ENCODE measurements at regions of chr14 and their contacts with region 1.

Region 1: GRCh38 chr14:24332268-24332993 is 2.4 kb downstream of the ADCY4 start:
- H3K4me3 ChIP-seq: no peak overlapping the region
- H3K27ac ChIP-seq: no peak overlapping the region
- H3K4me1 ChIP-seq: peaks cover 4% of the 10 kb centered on the region; the same call in 1 of the 2 replicates
- CTCF ChIP-seq: peak; percentile 67; the same call in 1 of the 2 replicates

Region 2: DNA sequence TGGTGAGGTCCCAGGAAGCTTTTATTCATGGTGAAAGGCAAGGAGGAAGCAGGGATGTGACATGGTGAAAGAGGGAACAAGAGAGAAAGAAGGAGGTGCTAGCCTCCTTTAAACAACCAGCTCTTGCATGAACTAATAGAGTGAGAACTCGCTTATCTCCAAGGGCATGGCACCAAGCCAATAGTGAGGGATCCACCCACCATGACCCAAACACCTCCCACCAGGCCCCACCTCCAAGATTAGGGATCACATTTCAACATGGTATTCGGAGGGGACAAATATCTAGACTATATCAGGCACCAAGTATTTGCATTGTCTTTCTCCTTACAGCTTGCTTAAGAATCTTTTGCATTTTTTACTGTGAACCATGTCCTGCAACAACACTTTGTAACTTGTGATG is 470.8 kb before region 1 on chr14:
- CTCF ChIA-PET with region 1: no interaction called
- POLR2A ChIA-PET with region 1: no interaction called
- H3K4me3 ChIP-seq: no peak overlapping the region
- H3K27ac ChIP-seq: no peak overlapping the region
- H3K4me1 ChIP-seq: peaks cover 7% of the 10 kb centered on the region; the same call in 1 of the 2 replicates
- CTCF ChIP-seq: no peak

Region 3: GRCh38 chr14:24114536-24115450 is 217.6 kb before region 1 on chr14 and contains the starts of genes DCAF11 and NRL:
- CTCF ChIA-PET with region 1: no interaction called
- POLR2A ChIA-PET with region 1: no interaction called
- H3K4me3 ChIP-seq: peak within 1 kb of the TSS; percentile 98
- H3K27ac ChIP-seq: peak within 1 kb of the TSS; percentile 94
- H3K4me1 ChIP-seq: no peaks in the 10 kb centered on the region
- CTCF ChIP-seq: no peak

Region 4: GRCh38 chr14:24310646-24311604 is 21.5 kb before region 1 on chr14 and contains the start of gene LTB4R:
- CTCF ChIA-PET with region 1: interaction called, 14 read pairs
- POLR2A ChIA-PET with region 1: no interaction called
- H3K4me3 ChIP-seq: no peak within 1 kb of the TSS
- H3K27ac ChIP-seq: no peak within 1 kb of the TSS
- H3K4me1 ChIP-seq: no peaks in the 10 kb centered on the region
- CTCF ChIP-seq: no peak

Region 5: GRCh38 chr14:24343795-24344660 is 11.6 kb after region 1 on chr14:
- CTCF ChIA-PET with region 1: interaction called, 17 read pairs
- POLR2A ChIA-PET with region 1: no interaction called
- H3K4me3 ChIP-seq: no peak overlapping the region
- H3K27ac ChIP-seq: no peak overlapping the region
- H3K4me1 ChIP-seq: no peaks in the 10 kb centered on the region
- CTCF ChIP-seq: no peak

Region 6: GRCh38 chr14:24360281-24360680 is 27.9 kb after region 1 on chr14:
- CTCF ChIA-PET with region 1: interaction called, 24 read pairs
- POLR2A ChIA-PET with region 1: no interaction called
- H3K4me3 ChIP-seq: no peak overlapping the region
- H3K27ac ChIP-seq: no peak overlapping the region
- H3K4me1 ChIP-seq: peaks cover 2% of the 10 kb centered on the region; the same call in 1 of the 2 replicates
- CTCF ChIP-seq: no peak

Region 7: GRCh38 chr14:24366721-24367513 is 34.5 kb after region 1 on chr14:
- CTCF ChIA-PET with region 1: interaction called, 24 read pairs
- POLR2A ChIA-PET with region 1: interaction called, 5 read pairs
- H3K4me3 ChIP-seq: peak overlapping the region; percentile 39
- H3K27ac ChIP-seq: peak overlapping the region; percentile 97
- H3K4me1 ChIP-seq: peaks cover 12% of the 10 kb centered on the region
- CTCF ChIP-seq: no peak

Region 8: GRCh38 chr14:24442273-24443052 is 110.0 kb after region 1 on chr14 and contains the start of gene SDR39U1:
- CTCF ChIA-PET with region 1: interaction called, 468 read pairs
- POLR2A ChIA-PET with region 1: interaction called, 12 read pairs
- H3K4me3 ChIP-seq: peak within 1 kb of the TSS; percentile 71
- H3K27ac ChIP-seq: peak within 1 kb of the TSS; percentile 93
- H3K4me1 ChIP-seq: peaks cover 8% of the 10 kb centered on the region
- CTCF ChIP-seq: 0 out of 2 replicates have a peak, but pooled peaks have one; percentile 36

Measured in HEK293 (cell line).